H1 (cell line): ENCODE measurements at regions of chr11 and their contacts with region 1.

Region 1: GRCh38 chr11:114280696-114281095 is 15.5 kb upstream of the NNMT start:
- DNase-seq: peak; percentile 85 to 87
- H3K4me3 ChIP-seq: no peak overlapping the region
- H3K27ac ChIP-seq: no peak overlapping the region
- H3K4me1 ChIP-seq: peaks cover 0 to 4% (median 0%) of the 10 kb centered on the region in 4 experiments; a peak in 2 of 7 replicates
- H3K27me3 ChIP-seq: no peaks in the 10 kb centered on the region
- CTCF ChIP-seq: peak; percentile 67 to 87 (median 87)
- EP300 ChIP-seq: no peak
- POLR2A ChIP-seq: no peak
- RAD21 ChIP-seq: peak; percentile 95 to 98

Region 2: GRCh38 chr11:114269498-114269897 is 11.2 kb before region 1 on chr11:
- CTCF ChIA-PET with region 1: interaction called, 123 read pairs
- POLR2A ChIA-PET with region 1: no interaction called
- DNase-seq: no peak
- H3K4me3 ChIP-seq: no peak overlapping the region
- H3K27ac ChIP-seq: no peak overlapping the region
- H3K4me1 ChIP-seq: no peaks in the 10 kb centered on the region; a peak in 1 of 7 replicates
- H3K27me3 ChIP-seq: no peaks in the 10 kb centered on the region
- CTCF ChIP-seq: no peak
- EP300 ChIP-seq: no peak
- POLR2A ChIP-seq: no peak
- RAD21 ChIP-seq: no peak

Region 3: GRCh38 chr11:114291842-114292680 is 11.4 kb after region 1 on chr11:
- CTCF ChIA-PET with region 1: interaction called, 30 read pairs
- POLR2A ChIA-PET with region 1: interaction called, 3 read pairs
- DNase-seq: no peak
- H3K4me3 ChIP-seq: no peak overlapping the region
- H3K27ac ChIP-seq: no peak overlapping the region
- H3K4me1 ChIP-seq: no peaks in the 10 kb centered on the region
- H3K27me3 ChIP-seq: no peaks in the 10 kb centered on the region
- CTCF ChIP-seq: no peak
- EP300 ChIP-seq: no peak
- POLR2A ChIP-seq: no peak
- RAD21 ChIP-seq: no peak